Right ventricle myocardium inferior (tissue), 1 donor: ENCODE measurements at regions of chr4 and their contacts with region 1.

Region 1: GRCh38 chr4:3346146-3346545 is 53.3 kb downstream of the RGS12 start:
- DNase-seq: no peak
- ATAC-seq: peak; percentile 95

Region 2: DNA sequence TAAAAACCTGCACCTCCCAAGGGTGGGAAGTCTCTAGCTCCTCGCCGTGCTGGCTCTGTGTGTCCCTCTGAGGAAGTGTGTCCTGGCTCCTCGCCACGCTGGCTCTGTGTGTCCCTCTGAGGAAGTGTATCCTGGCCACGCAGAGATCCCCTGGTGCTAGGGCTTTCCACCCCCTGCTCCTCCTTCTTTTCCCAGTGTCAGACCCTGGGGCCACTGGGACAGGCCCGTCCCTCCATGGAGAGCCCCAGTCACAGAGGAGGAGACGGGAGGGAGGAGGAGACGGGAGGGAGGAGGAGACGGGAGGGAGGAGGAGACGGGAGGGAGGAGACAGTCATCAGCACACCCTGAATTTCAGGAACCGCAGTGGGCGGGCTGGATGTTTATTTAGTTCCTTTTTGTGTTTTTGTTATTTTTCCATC is 41.8 kb after region 1 on chr4:
- intact Hi-C with region 1: no loop called
- DNase-seq: peak; percentile 96
- ATAC-seq: peak; percentile 82

Region 3: DNA sequence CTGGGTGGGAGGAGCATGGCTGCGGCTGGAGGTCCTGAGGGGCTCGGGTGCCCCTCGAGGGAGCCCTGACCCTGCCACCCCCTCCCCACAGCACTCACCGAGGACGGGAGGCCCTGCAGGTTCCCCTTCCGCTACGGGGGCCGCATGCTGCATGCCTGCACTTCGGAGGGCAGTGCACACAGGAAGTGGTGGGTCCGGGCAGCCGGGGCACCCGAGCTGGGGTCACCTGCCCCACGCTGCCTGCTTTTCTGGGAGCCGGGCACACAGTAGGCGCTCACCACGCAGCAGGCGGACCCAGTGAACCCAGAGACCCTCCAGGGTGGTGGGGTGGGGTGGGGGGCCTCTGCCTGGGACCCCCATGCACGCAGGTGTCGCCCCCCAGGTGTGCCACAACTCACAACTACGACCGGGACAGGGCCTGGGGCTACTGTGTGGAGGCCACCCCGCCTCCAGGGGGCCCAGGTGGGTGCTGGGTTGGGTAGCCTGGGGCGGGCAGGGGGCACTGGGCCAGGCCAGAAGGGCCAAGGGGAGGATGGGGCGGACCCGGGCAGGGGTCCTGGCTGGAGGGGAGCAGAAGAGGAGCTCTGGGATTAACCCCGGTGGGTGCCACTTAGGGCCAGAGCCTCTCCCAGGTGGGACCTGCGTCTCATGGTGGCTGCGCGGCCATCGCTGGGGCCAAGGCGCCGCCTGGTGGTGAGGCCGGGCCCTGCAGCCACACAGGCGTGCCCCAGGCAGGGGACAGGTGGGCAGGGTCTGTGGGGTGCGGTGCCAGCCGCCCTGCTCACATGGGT is 97.0 kb after region 1 on chr4:
- intact Hi-C with region 1: loop called (anchors 1 kb)
- DNase-seq: peak; percentile 71
- ATAC-seq: peak; percentile 54

Region 4: DNA sequence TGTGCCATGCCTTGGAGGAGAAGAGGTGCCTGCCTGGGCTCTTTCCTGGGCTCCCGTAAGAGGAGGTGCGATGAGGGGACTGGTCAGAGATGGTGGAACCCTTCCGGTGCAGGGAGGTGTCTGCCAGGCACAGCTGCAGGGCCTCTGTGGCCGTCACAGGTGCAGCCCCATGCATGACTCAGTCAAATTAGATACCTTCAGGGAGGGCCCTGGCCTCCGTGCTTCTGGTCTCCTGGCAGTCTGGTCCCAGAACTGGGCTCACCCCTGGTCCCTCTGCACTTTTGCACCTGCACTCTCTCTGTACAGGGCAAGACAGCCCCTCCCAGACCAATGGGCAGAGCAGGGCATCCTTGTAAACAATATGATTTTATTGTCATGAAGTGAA is 235.9 kb after region 1 on chr4:
- intact Hi-C with region 1: no loop called
- DNase-seq: no peak
- ATAC-seq: no peak

Region 5: GRCh38 chr4:4170596-4171150 is 824.5 kb after region 1 on chr4:
- intact Hi-C with region 1: no loop called
- DNase-seq: no peak
- ATAC-seq: no peak